PC-3 (cell line): ENCODE measurements at regions of chr12 and their contacts with region 1.

Region 1: DNA sequence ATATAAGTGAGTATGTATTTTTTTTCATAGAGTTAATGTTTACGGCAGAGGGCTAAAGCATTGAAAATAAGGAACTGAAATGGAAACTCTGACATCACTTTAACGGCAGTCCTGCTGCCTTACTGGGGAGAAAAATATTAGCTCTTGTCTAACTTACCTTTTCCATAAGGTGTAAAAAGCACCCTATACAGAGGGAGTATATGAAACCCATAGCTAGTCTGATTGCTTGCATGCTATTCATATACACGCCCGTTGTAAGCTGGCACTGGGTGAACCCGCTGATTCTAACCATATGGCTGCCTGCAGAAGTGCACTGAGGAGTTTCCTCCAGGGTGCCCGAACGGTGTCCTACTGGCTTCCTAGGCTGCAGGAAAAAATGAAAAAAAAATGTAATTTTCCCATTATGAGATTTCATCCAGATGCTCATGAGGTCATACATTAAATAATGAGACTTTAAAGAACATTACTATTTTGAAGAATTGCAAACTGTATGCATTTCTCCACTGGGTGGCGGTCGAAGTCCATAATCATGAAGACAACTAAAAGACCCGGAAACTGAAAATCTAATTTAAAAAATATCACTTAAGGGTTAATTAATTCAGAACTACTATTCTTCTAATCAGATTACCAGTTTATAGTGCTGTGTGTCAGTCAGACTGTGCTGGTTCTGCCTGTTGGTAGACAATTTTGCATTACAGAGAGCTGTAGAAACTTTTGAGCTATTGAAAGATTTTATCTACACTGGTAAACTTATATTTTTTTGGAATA is 144.7 kb downstream of the ALX1 start:
- DNase-seq: peak; percentile 66
- ATAC-seq: peak; percentile 72
- H3K4me3 ChIP-seq: no peak overlapping the region
- H3K27ac ChIP-seq: no peak overlapping the region
- H3K4me1 ChIP-seq: no peaks in the 10 kb centered on the region
- H3K27me3 ChIP-seq: peaks cover 21% of the 10 kb centered on the region; the same call in 1 of the 2 replicates
- CTCF ChIP-seq: peak; percentile 81

Region 2: DNA sequence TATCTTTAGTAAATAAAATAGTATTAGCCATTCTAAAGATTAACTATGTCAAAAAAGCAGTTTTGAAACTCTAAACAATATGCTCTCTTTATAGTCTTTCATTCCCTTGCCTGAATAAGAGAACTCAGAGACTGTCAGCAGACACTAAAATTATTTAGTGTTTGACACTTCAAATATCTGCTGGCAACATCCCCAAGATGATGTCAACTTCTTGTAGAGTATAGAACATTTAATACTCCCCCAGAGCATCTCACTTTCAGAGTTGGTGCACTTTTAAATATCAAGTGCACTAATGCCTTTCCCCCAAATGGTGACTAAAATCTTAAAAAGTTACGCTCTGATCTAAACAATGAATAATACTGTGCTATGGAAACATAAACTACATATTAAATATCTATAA is 887.1 kb before region 1 on chr12:
- CTCF ChIA-PET with region 1: no interaction called
- POLR2A ChIA-PET with region 1: no interaction called
- intact Hi-C with region 1: no loop called
- DNase-seq: no peak
- ATAC-seq: no peak
- H3K4me3 ChIP-seq: no peak overlapping the region
- H3K27ac ChIP-seq: no peak overlapping the region
- H3K4me1 ChIP-seq: peaks cover 5% of the 10 kb centered on the region; the same call in 1 of the 2 replicates
- H3K27me3 ChIP-seq: no peaks in the 10 kb centered on the region
- CTCF ChIP-seq: no peak

Region 3: DNA sequence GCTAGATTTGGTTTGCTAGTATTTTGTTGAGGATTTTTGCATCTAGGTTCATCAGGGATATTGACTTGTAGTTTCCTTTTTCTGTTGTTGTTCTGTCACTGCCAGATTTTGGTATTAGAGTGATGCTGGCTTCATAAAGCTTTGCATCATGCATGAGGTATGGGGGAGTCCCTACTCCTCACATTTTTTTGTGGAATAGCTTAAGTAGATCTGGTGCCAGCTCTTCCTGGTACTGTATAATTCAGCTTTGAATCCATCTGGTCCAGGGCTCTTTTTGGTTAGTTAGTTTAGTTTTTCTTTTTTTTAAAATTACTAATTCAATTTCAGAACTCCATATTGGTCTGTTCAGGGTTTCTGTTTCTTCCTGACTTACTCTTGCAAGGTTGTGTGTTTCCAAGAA is 329.3 kb before region 1 on chr12:
- CTCF ChIA-PET with region 1: no interaction called
- POLR2A ChIA-PET with region 1: no interaction called
- intact Hi-C with region 1: no loop called
- DNase-seq: no peak
- ATAC-seq: no peak
- H3K4me3 ChIP-seq: no peak overlapping the region
- H3K27ac ChIP-seq: no peak overlapping the region
- H3K4me1 ChIP-seq: peaks cover 26% of the 10 kb centered on the region
- H3K27me3 ChIP-seq: no peaks in the 10 kb centered on the region
- CTCF ChIP-seq: no peak

Region 4: GRCh38 chr12:85441740-85442139 is 17.0 kb after region 1 on chr12:
- CTCF ChIA-PET with region 1: interaction called, 6 read pairs
- POLR2A ChIA-PET with region 1: no interaction called
- intact Hi-C with region 1: loop called (anchors 1 kb)
- DNase-seq: peak; percentile 33
- ATAC-seq: peak; percentile 78
- H3K4me3 ChIP-seq: no peak overlapping the region
- H3K27ac ChIP-seq: no peak overlapping the region
- H3K4me1 ChIP-seq: no peaks in the 10 kb centered on the region
- H3K27me3 ChIP-seq: no peaks in the 10 kb centered on the region
- CTCF ChIP-seq: peak; percentile 71

Region 5: GRCh38 chr12:85603556-85603955 is 178.8 kb after region 1 on chr12:
- CTCF ChIA-PET with region 1: no interaction called
- POLR2A ChIA-PET with region 1: no interaction called
- intact Hi-C with region 1: no loop called
- DNase-seq: no peak
- ATAC-seq: no peak
- H3K4me3 ChIP-seq: no peak overlapping the region
- H3K27ac ChIP-seq: no peak overlapping the region
- H3K4me1 ChIP-seq: peaks cover 6% of the 10 kb centered on the region
- H3K27me3 ChIP-seq: no peaks in the 10 kb centered on the region
- CTCF ChIP-seq: no peak

Region 6: DNA sequence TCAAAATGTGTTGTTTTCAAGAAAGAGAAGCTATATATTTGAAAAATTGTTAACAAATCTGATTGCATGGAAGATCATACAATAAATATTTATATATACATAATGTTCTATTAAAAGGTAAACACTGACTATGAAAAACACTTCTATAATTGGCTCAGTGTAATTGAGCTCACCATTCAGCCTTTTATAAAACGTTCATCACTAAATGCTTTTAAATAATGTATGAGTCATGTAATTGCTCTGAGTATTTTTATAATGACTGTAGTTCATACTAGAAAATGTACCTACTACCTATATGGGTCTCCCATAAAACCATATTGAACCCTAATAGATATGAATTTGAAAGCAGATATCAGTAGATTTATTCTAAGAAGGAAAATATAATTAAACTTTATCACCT is 1071.8 kb after region 1 on chr12:
- CTCF ChIA-PET with region 1: no interaction called
- POLR2A ChIA-PET with region 1: no interaction called
- intact Hi-C with region 1: no loop called
- DNase-seq: no peak
- ATAC-seq: peak; percentile 40; the same call in 1 of the 2 replicates
- H3K4me3 ChIP-seq: no peak overlapping the region
- H3K27ac ChIP-seq: no peak overlapping the region
- H3K4me1 ChIP-seq: no peaks in the 10 kb centered on the region
- H3K27me3 ChIP-seq: no peaks in the 10 kb centered on the region
- CTCF ChIP-seq: no peak